PC-9 (cell line): ENCODE measurements at regions of chr12 and their contacts with region 1.

Region 1: GRCh38 chr12:65878544-65878943 is 54.3 kb downstream of the HMGA2 start:
- DNase-seq: peak; percentile 71 to 85
- H3K4me3 ChIP-seq: no peak overlapping the region
- H3K27ac ChIP-seq: no peak overlapping the region
- H3K4me1 ChIP-seq: peaks cover 51% of the 10 kb centered on the region
- H3K27me3 ChIP-seq: no peaks in the 10 kb centered on the region
- CTCF ChIP-seq: peak; percentile 56

Region 2: GRCh38 chr12:64796208-64796845 is 1082.2 kb before region 1 on chr12:
- CTCF ChIA-PET with region 1: no interaction called
- POLR2A ChIA-PET with region 1: no interaction called
- intact Hi-C with region 1: loop called (anchors 10 kb)
- DNase-seq: peak; percentile 70 to 92
- H3K4me3 ChIP-seq: peak overlapping the region; percentile 20; the same call in 1 of the 2 replicates
- H3K27ac ChIP-seq: peak overlapping the region; percentile 84
- H3K4me1 ChIP-seq: peaks cover 33% of the 10 kb centered on the region
- H3K27me3 ChIP-seq: no peaks in the 10 kb centered on the region
- CTCF ChIP-seq: peak; percentile 93

Region 3: DNA sequence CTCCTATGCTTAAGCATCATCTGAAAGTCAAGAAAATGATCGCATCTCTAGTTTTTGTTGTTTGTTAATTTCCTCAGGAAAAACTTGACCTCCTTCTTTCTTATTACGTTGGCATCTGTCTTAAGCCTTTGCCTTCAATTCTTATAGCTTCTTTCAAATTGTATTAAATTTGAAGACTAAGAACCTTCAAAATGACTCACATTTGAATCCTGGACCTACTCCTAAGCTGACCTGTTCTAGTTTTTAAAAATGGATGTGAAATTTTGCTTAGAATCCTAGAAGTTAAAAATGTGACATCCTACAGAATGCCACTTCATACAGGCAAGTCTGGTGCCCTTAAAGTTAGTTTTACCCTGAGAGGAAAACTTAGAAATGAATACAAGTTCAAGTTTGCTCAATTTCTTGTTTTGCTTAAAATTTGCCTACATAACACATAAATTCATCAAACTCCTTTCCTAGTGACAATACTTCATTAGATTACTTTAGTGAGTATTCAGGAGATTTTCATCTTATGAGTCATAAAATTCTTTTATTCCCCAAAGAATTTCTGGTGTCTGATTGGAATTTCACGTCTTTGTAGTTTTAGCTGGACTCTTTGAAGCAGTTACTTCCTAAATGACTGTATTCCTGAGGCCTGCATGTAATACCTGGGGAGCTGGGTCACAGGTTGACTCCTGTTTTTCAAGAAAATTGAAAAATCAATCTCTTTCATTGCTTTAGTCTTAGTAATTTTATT is 447.8 kb before region 1 on chr12:
- CTCF ChIA-PET with region 1: no interaction called
- POLR2A ChIA-PET with region 1: no interaction called
- intact Hi-C with region 1: loop called (anchors 1 kb)
- DNase-seq: peak; percentile 7 to 78
- H3K4me3 ChIP-seq: no peak overlapping the region
- H3K27ac ChIP-seq: peak overlapping the region; percentile 41
- H3K4me1 ChIP-seq: peaks cover 14% of the 10 kb centered on the region
- H3K27me3 ChIP-seq: no peaks in the 10 kb centered on the region
- CTCF ChIP-seq: no peak

Region 4: DNA sequence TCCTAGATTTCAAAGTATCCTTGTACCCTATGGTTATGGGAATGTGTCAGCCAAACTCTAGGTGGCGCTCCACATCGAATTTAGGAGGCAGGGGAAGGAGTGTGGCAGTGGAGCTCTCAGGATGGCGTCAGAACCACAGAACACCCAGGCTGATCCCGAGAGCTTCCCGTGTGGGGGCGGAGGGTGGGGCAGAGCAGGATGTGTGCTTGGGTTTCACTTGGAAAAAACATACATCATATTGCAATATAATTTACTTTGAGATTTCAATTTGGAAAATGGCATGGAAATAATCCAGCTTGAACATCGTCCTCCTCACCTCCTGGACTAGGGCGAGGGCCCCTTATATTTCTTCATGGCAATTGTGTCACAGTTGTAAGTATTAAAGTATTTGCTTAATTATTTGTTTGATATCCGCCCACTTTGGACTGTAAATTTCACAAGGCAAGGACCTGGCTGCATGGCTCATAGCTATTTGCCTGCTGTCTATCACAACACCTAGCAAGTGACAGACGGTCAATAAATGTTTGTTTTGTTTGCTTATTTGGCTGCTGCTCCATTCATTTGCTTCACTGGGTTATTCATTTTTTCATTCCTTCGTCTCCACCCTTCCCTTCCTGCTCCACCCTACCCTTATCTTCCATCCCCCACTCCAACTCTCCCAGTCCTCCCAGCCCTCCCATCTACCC is 275.8 kb before region 1 on chr12:
- CTCF ChIA-PET with region 1: interaction called, 5 read pairs
- POLR2A ChIA-PET with region 1: no interaction called
- intact Hi-C with region 1: loop called (anchors 1 kb)
- DNase-seq: peak; percentile 74 to 97
- H3K4me3 ChIP-seq: peak overlapping the region; percentile 53; the same call in 1 of the 2 replicates
- H3K27ac ChIP-seq: peak overlapping the region; percentile 82
- H3K4me1 ChIP-seq: peaks cover 70% of the 10 kb centered on the region
- H3K27me3 ChIP-seq: no peaks in the 10 kb centered on the region
- CTCF ChIP-seq: peak; percentile 94

Region 5: GRCh38 chr12:65948320-65949008 is 69.9 kb after region 1 on chr12:
- CTCF ChIA-PET with region 1: no interaction called
- POLR2A ChIA-PET with region 1: no interaction called
- intact Hi-C with region 1: loop called (anchors 1 kb)
- DNase-seq: peak in 1 of 2 experiments; percentile 81
- H3K4me3 ChIP-seq: no peak overlapping the region
- H3K27ac ChIP-seq: peak overlapping the region; percentile 18; the same call in 1 of the 2 replicates
- H3K4me1 ChIP-seq: peaks cover 5% of the 10 kb centered on the region; the same call in 1 of the 2 replicates
- H3K27me3 ChIP-seq: no peaks in the 10 kb centered on the region
- CTCF ChIP-seq: no peak

Region 6: GRCh38 chr12:65996146-65996545 is 117.6 kb after region 1 on chr12:
- CTCF ChIA-PET with region 1: no interaction called
- POLR2A ChIA-PET with region 1: no interaction called
- intact Hi-C with region 1: no loop called
- DNase-seq: no peak
- H3K4me3 ChIP-seq: no peak overlapping the region
- H3K27ac ChIP-seq: no peak overlapping the region
- H3K4me1 ChIP-seq: no peaks in the 10 kb centered on the region
- H3K27me3 ChIP-seq: no peaks in the 10 kb centered on the region
- CTCF ChIP-seq: no peak

Region 7: GRCh38 chr12:66087365-66087943 is 208.9 kb after region 1 on chr12:
- CTCF ChIA-PET with region 1: no interaction called
- POLR2A ChIA-PET with region 1: no interaction called
- intact Hi-C with region 1: loop called (anchors 2 kb)
- DNase-seq: peak in 1 of 2 experiments; percentile 56
- H3K4me3 ChIP-seq: no peak overlapping the region
- H3K27ac ChIP-seq: no peak overlapping the region
- H3K4me1 ChIP-seq: no peaks in the 10 kb centered on the region
- H3K27me3 ChIP-seq: no peaks in the 10 kb centered on the region
- CTCF ChIP-seq: peak; percentile 80